PC-3 (cell line): ENCODE measurements at regions of chr21 and their contacts with region 1.

Region 1: GRCh38 chr21:25171438-25171837 is 435.8 kb downstream of the MRPL39 start:
- DNase-seq: peak; percentile 55
- ATAC-seq: 0 out of 2 replicates have a peak, but pooled peaks have one; percentile 16
- H3K4me3 ChIP-seq: no peak overlapping the region
- H3K27ac ChIP-seq: no peak overlapping the region
- H3K4me1 ChIP-seq: no peaks in the 10 kb centered on the region
- H3K27me3 ChIP-seq: no peaks in the 10 kb centered on the region
- CTCF ChIP-seq: no peak

Region 2: DNA sequence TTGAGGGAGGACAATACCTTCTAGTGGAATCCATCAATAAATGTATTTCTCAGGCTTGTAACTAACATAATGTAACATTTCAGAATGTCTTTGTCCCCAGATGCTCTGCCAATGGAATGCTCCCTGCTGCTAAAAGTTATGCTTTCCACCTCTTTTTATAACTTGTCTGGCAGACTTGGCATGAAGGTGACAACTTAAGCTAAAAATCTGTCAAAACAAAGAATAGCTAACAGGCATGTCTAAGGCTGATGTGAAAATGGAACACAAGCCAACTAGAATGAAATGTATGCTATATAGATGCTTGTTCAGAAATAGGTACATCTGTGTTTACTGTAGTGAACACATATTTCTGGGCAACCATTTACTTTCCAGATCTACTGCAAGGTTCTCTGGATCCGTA is 32.0 kb before region 1 on chr21:
- CTCF ChIA-PET with region 1: no interaction called
- POLR2A ChIA-PET with region 1: no interaction called
- intact Hi-C with region 1: loop called (anchors 1 kb)
- DNase-seq: no peak
- ATAC-seq: no peak
- H3K4me3 ChIP-seq: no peak overlapping the region
- H3K27ac ChIP-seq: no peak overlapping the region
- H3K4me1 ChIP-seq: no peaks in the 10 kb centered on the region
- H3K27me3 ChIP-seq: no peaks in the 10 kb centered on the region
- CTCF ChIP-seq: no peak

Region 3: GRCh38 chr21:25191141-25191540 is 19.7 kb after region 1 on chr21:
- CTCF ChIA-PET with region 1: no interaction called
- POLR2A ChIA-PET with region 1: no interaction called
- intact Hi-C with region 1: loop called (anchors 1 kb)
- DNase-seq: peak; percentile 38
- ATAC-seq: no peak
- H3K4me3 ChIP-seq: no peak overlapping the region
- H3K27ac ChIP-seq: no peak overlapping the region
- H3K4me1 ChIP-seq: 0 out of 2 replicates have a peak, but pooled peaks cover 2% of the 10 kb centered on the region
- H3K27me3 ChIP-seq: no peaks in the 10 kb centered on the region
- CTCF ChIP-seq: no peak

Region 4: GRCh38 chr21:25313829-25314228 is 142.4 kb after region 1 on chr21:
- CTCF ChIA-PET with region 1: no interaction called
- POLR2A ChIA-PET with region 1: no interaction called
- intact Hi-C with region 1: loop called (anchors 5 kb)
- DNase-seq: peak; percentile 63
- ATAC-seq: peak; percentile 86
- H3K4me3 ChIP-seq: peak overlapping the region; percentile 37; the same call in 1 of the 2 replicates
- H3K27ac ChIP-seq: no peak overlapping the region
- H3K4me1 ChIP-seq: 0 out of 2 replicates have a peak, but pooled peaks cover 8% of the 10 kb centered on the region
- H3K27me3 ChIP-seq: no peaks in the 10 kb centered on the region
- CTCF ChIP-seq: peak; percentile 75

Region 5: DNA sequence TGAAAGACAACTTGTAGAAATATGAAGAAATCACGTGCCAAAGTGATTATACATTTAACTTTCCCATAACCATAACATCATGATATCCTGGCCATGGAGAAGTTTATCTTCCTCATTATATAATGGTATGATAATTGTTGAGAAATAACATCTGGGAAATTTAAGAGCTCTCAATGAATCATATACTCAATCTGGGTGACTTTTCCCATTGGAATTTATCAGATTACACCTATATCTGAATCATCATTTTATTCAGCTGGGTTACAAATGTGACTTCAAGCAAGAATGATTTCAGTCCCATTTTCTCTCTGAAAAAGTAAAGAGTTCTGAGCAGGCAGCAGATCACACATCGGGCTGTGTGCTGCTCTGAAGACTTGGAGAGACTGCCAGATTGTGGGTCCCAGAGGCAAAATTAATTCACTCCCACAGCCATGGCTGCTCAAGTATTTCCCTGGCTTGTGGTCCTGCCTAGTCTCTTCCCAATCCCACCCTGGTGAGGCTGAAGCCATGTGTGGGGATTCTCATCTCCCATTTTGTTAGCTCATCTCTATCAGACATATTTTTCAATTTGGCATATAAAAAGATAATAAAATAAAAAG is 157.9 kb after region 1 on chr21:
- CTCF ChIA-PET with region 1: no interaction called
- POLR2A ChIA-PET with region 1: no interaction called
- intact Hi-C with region 1: loop called (anchors 5 kb)
- DNase-seq: peak; percentile 91
- ATAC-seq: peak; percentile 76
- H3K4me3 ChIP-seq: no peak overlapping the region
- H3K27ac ChIP-seq: peak overlapping the region; percentile 80
- H3K4me1 ChIP-seq: peaks cover 32% of the 10 kb centered on the region
- H3K27me3 ChIP-seq: no peaks in the 10 kb centered on the region
- CTCF ChIP-seq: no peak

Region 6: DNA sequence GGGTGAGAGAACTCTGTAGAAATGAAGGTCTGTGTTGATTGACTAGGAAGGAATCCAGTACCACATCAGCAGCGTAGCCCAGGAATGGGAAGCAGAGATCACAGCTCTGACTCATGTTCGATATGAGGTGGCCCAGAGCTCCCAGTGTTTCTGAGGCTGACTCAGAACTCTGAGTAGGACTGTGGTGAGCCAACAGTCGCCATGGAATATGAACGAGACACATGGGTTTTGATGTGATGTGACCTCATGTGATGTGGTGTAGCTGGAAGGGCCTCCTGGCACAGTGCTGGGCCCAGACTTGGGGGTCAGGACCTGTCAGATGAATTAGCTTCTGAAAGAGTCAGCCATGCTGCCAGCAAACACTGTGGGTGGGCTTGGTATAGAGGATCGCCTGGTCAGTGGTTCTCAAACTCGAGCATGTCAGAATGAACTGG is 198.9 kb after region 1 on chr21:
- CTCF ChIA-PET with region 1: no interaction called
- POLR2A ChIA-PET with region 1: no interaction called
- intact Hi-C with region 1: loop called (anchors 1 kb)
- DNase-seq: peak; percentile 97
- ATAC-seq: peak; percentile 92
- H3K4me3 ChIP-seq: no peak overlapping the region
- H3K27ac ChIP-seq: peak overlapping the region; percentile 84
- H3K4me1 ChIP-seq: peaks cover 45% of the 10 kb centered on the region
- H3K27me3 ChIP-seq: no peaks in the 10 kb centered on the region
- CTCF ChIP-seq: no peak